ENCODE measurements at regions of chr11 and their contacts with region 1.

Region 1: DNA sequence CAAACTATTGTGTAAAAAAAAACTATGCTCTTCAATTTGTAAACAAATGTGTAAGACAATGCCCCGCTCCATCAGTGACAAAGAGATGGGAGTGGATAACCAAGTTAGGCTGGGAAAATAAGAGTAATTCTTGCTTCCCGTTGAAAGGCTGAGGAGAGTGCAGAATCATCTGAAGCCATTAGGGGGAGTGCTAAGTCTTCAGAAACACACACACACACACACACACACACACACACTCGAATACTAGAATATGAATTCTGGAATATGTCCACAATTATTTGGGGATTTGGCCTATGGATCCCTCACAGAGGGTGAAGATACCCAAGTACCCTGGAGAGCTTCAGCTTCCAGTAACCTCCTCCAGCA is 27.8 kb upstream of the ROBO3 start:
- DNase-seq: no peak
- ATAC-seq: peak; percentile 46
- H3K4me3 Mint-ChIP-seq: no peak overlapping the region
- H3K27ac Mint-ChIP-seq: no peak overlapping the region
- H3K4me1 Mint-ChIP-seq: peaks cover 18% of the 10 kb centered on the region
- H3K27me3 Mint-ChIP-seq: peaks cover 73% of the 10 kb centered on the region

Region 2: GRCh38 chr11:124644426-124645280 is 192.8 kb before region 1 on chr11:
- CTCF ChIA-PET with region 1: interaction called, 30 read pairs
- DNase-seq: no peak
- ATAC-seq: peak; percentile 60
- H3K4me3 Mint-ChIP-seq: no peak overlapping the region
- H3K27ac Mint-ChIP-seq: no peak overlapping the region
- H3K4me1 Mint-ChIP-seq: peaks cover 2% of the 10 kb centered on the region
- H3K27me3 Mint-ChIP-seq: no peaks in the 10 kb centered on the region

Region 3: GRCh38 chr11:124746621-124747243 is 90.7 kb before region 1 on chr11:
- CTCF ChIA-PET with region 1: interaction called, 22 read pairs
- DNase-seq: peak; percentile 85
- ATAC-seq: peak; percentile 92
- H3K4me3 Mint-ChIP-seq: peak overlapping the region; percentile 89
- H3K27ac Mint-ChIP-seq: peak overlapping the region; percentile 89
- H3K4me1 Mint-ChIP-seq: peaks cover 14% of the 10 kb centered on the region
- H3K27me3 Mint-ChIP-seq: peaks cover 26% of the 10 kb centered on the region

Region 4: DNA sequence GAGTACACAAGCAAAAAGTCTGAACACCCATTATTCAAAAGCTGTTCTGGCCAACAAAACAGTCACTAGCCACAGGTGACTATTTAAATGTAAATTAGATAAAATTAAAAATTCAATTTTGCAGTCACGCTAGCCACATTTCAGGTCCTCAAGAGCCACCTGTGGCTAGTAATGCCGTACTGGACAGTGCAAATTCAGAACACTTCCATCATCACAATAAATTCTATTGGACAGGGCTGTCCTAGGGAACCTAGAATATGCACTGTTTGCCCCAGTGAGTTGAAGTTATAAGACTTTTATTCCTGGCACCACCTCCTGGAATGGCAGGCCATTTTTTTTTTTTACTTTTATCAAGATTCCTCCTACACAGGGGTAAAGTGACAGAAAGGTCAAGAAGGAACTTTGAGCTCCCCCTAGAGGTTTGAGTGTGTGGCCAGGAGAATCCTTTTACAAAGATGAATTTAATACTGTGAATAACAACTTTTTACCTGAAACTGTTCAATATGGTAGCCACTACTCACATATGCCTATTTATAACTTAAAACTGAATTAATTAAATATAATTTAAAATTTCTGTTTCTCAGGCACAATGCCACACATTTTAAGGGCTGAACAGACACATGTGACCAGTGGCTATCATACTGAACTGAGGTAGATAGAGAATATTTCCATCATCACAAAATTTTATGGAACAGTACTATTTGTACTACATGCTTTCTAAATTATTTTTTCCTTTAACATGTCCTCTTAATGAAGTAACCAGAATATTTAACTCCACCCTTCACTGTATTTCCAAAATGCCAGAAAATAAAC is 43.8 kb before region 1 on chr11:
- CTCF ChIA-PET with region 1: interaction called, 45 read pairs
- DNase-seq: no peak
- ATAC-seq: peak; percentile 57
- H3K4me3 Mint-ChIP-seq: no peak overlapping the region
- H3K27ac Mint-ChIP-seq: no peak overlapping the region
- H3K4me1 Mint-ChIP-seq: peaks cover 36% of the 10 kb centered on the region
- H3K27me3 Mint-ChIP-seq: no peaks in the 10 kb centered on the region

Region 5: DNA sequence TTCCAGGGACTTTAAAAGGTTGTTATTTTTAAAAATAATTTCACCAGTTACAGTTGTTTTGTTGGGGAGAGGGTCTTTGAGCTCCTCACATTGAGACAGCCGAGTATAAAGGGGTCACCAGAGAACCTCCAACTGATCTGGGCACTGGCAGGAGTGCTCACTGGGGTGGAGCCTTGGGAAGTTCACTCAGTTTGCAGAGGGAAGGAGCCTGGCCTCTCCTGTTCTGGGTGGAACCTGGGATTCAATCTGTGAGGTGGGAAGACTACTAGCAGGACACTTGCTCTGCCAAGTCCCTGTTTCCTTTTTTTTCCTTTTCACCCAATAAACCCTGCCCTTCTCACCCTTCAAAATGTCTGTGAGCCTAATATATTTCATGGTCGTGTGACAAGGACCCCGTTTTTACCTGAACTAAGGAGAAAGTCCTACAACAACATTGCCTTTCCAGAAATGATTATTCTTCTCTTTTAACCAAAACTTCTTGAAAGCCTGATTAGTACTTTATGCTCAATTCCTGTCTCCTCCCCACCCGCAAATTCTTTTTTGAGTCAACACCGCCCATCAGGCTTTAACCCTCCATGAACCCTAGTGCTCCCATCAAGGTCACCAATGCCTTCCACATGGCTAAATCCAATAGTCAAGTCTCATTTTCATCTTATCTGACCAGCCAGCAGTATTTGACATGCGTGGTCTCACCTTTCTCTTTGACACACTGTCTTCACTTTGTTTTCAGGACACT is 15.3 kb before region 1 on chr11:
- CTCF ChIA-PET with region 1: no interaction called
- DNase-seq: no peak
- ATAC-seq: no peak
- H3K4me3 Mint-ChIP-seq: no peak overlapping the region
- H3K27ac Mint-ChIP-seq: no peak overlapping the region
- H3K4me1 Mint-ChIP-seq: no peaks in the 10 kb centered on the region
- H3K27me3 Mint-ChIP-seq: peaks cover 60% of the 10 kb centered on the region

Region 6: DNA sequence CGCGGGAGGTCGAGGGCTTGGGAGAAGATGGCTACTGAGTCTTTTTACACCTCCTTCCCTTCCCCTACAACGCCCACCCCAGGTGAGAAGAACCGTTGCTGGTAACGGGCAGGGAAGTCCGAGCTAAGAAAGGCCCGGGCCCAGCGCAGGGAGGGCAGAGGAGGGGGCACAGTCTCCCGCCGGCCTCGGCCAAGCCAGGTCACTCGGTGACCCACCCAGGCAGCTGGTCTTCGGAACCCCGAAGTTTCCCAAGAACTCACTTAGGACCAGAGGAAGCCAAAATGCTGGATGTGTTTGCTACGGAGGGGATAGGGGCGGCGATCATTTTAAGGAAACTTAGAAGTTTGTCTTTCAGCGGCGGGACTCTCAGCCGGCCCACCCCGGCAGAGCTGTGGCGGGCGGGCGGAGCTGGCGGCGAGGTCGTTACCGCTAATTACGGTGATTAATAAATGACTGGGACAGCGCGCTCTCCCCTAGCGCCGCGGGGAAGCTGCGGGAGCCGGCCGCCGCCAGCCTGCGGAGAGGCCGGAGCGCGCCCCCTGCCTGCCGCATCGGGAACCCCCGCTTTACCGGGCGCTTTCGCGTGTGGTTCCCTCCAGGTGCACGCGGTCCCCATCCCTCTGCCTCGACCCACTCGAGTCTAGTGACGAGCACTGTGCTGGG is 28.6 kb after region 1 on chr11:
- CTCF ChIA-PET with region 1: interaction called, 15 read pairs
- DNase-seq: peak; percentile 52
- ATAC-seq: peak; percentile 66
- H3K4me3 Mint-ChIP-seq: no peak overlapping the region
- H3K27ac Mint-ChIP-seq: no peak overlapping the region
- H3K4me1 Mint-ChIP-seq: peaks cover 17% of the 10 kb centered on the region
- H3K27me3 Mint-ChIP-seq: peaks cover 89% of the 10 kb centered on the region

Region 7: GRCh38 chr11:125111343-125112207 is 274.1 kb after region 1 on chr11 and contains the start of gene TMEM218:
- CTCF ChIA-PET with region 1: no interaction called
- DNase-seq: peak; percentile 99
- ATAC-seq: peak; percentile 99
- H3K4me3 Mint-ChIP-seq: peak within 1 kb of the TSS; percentile 91
- H3K27ac Mint-ChIP-seq: peak within 1 kb of the TSS; percentile 93
- H3K4me1 Mint-ChIP-seq: peaks cover 20% of the 10 kb centered on the region
- H3K27me3 Mint-ChIP-seq: peaks cover 2% of the 10 kb centered on the region
- total RNA-seq, gene TMEM218: 14.1 to 16.1 TPM

Measured in activated CD8-positive, alpha-beta memory T cell treated with anti-CD3 and anti-CD28 coated beads, Interleukin-2, amount 10 ng/mL, durations not matched to agents 7 days and 5 days (primary cell).